Lower leg skin (tissue), 4 donors: ENCODE measurements at regions of chr20 and their contacts with region 1.

Region 1: DNA sequence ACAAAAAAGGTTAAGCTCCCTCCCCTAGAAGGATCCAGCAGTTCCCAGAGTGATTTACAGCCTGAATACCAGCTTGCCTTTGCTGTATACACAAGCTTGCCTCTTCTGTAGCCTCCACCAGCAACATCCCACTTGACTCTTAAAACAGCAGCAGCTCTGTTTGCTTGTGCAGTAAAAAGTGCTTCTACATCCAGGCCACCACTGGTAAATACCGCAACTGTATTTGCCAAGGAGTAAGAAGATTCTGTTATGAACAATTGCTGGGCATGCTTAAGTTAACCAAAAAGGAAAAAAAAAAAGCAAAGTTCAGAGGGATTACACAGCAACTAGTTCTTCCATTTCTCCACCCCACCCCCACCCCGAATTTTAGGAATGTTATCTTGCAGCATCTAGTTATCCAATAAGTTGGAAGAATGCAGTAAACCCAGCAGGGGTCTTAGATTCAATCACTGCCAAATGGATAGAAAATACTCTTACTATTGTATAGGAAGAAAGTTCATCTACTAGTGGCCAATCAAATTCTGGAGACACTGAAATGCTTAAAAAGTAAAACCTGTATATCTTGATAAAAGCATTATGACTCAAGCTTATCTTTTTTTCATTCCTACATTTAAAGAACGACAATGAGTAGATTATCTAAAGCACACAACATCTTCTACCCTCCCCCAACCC is 4.8 kb downstream of the SALL4 start:
- DNase-seq: no peak
- H3K4me3 ChIP-seq: no peak overlapping the region
- CTCF ChIP-seq: no peak
- POLR2A ChIP-seq: no peak

Region 2: DNA sequence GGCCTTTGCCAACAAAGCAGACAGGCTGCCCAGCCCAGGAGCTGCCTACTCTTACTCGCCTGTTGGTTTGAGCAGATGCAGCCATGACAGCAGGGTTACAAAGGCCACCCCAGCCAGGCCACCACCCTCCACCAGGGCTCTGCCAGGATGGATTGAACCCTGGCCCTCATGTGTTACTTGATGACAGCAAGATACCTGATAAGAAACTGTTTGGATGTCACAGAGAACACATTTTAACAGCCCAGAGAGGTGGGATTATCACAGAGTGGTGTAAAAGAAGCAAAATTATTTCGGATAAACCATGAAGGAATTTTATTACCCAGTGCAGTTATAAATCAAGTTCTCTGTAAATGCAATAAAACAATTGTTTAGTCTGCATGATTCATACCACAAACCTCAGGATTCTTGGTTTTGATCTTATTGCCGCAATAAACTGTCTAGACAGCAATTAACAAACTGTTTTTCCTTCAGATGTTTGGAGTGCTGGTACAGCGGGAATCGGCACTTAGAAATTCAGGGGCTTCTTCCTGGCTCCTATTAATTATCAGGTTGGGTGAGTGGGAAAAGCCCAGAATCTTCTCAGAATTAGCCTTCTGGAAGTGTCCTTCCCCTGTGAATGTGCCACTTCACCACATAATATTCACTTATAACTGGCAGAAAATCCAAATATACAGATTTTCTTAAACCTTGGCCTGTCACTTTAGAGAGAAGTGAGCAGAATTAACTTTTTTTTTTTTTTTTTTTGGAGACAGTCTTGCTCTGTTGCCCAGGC is 62.8 kb after region 1 on chr20:
- intact Hi-C with region 1: no loop called
- DNase-seq: no peak
- H3K4me3 ChIP-seq: no peak overlapping the region
- CTCF ChIP-seq: no peak
- POLR2A ChIP-seq: no peak

Region 3: GRCh38 chr20:51984931-51985415 is 187.5 kb after region 1 on chr20:
- intact Hi-C with region 1: loop called (anchors 5 kb)
- DNase-seq: peak in 1 of 2 donors; percentile 23
- H3K4me3 ChIP-seq: no peak overlapping the region
- CTCF ChIP-seq: no peak
- POLR2A ChIP-seq: no peak

Region 4: DNA sequence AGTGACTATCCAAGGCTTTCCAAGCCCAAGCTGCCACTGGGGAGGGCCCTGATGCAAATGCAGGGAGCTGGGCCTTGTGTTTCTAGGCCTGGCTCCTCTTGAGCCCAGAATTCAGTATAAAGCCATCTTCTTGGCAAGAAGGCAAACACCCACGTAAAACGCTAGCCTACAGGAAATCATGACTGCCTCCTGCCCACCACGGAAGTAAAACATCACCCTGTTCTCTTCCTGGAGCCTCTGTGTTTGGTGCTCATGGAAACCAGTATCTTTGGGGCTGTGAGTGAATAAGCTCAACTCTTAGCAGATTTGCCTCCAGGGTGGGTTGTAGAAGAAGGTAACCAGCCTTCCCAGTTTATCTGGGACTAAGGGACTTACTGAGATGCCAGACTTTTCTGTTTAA is 1525.2 kb after region 1 on chr20:
- intact Hi-C with region 1: no loop called
- DNase-seq: no peak
- H3K4me3 ChIP-seq: no peak overlapping the region
- CTCF ChIP-seq: no peak
- POLR2A ChIP-seq: no peak